Naive thymus-derived CD4-positive, alpha-beta T cell (primary cell): ENCODE measurements at regions of chr7 and their contacts with region 1.

Region 1: DNA sequence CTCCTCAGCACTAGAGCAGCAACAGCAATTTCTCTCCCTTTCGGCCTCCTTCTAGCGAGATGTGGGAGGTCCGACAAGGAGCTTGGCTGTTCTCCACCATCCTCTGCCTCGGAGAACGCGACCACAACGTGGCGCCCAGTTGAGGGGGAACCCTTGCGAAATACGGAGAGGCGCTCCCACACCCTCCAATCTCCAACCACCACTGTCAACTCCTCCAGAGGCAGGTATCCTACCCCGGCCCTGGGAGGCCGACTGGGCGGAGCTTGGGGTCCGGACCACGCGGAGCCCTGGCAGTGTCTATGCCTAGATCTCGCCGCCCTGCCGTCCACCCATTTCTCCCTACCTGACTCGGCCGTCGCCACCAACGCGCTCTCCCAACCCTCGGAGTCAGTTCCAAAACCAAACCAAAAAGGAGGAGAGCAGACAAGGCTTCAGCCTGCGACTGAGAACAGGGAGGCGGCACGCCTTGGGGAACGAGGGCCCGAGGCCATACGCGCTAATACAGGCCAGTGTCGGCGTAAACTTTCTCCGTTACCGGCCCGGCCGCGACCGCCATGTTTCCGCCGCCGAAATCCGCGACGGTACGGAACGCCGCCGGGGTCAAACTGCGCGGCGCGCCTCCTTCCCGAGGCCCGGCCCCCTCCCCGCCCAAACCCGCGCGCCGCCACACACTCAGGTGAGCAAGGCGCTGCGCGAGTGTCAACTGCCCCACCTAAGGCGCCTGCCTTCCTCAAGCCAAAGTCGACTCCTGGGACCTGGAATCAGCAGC is at the start of gene TMEM168:
- DNase-seq: peak; percentile 75 to 91 (median 83)
- ATAC-seq: peak; percentile 94
- H3K4me3 ChIP-seq: peak within 1 kb of the TSS; percentile 98
- H3K4me3 Mint-ChIP-seq: peak within 1 kb of the TSS; percentile 90 to 97 (median 95)
- H3K27ac ChIP-seq: peak within 1 kb of the TSS; percentile 85
- H3K27ac Mint-ChIP-seq: peak within 1 kb of the TSS; percentile 63 to 93 (median 88)
- H3K4me1 ChIP-seq: peaks cover 13 to 23% of the 10 kb centered on the region in 2 donors
- H3K4me1 Mint-ChIP-seq: peaks cover 27 to 50% (median 36%) of the 10 kb centered on the region in 7 donors
- H3K27me3 ChIP-seq: no peaks in the 10 kb centered on the region
- H3K27me3 Mint-ChIP-seq: no peaks in the 10 kb centered on the region
- total RNA-seq, gene TMEM168: 18.3 to 30.1 (median 20.7) TPM

Region 2: DNA sequence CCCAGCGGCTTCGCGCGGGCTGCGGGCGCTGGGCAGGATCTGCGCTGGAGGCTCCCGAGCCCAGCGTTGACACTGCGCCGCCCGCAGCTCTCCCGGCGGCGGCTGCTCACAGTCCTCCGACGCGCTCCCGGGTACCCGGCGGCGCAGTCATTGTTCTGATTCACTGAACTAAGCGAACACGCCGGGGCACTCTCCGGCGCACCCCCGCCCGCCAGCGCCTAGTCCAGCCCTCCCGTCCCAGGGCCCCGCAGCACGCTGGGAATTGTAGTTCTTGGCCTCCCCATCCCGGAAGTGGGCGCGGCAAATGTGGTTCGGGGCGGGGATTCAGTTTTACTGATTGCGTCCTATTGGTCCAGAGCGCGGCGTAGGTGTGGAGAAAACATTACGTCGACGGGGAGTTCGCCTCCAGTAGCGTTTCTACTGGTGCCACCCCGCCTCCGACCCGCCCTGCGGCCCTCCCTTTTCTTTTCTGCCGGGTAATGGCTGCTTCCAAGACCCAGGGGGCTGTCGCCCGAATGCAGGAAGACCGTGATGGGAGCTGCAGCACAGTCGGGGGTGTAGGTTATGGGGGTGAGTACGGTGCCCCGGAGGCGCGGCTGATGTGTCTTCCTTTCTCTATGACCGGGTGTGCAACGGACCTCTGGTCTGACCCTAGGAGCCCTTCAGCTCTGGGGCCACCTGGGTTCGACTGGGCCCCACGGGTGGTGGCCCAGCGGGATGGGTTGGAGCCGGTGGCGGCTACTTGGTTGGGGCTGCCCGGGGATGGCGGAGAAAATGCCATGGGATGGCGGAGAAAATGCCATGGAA is 583.6 kb before region 1 on chr7 and contains the starts of genes DOCK4 and ZNF277:
- CTCF ChIA-PET with region 1: no interaction called
- POLR2A ChIA-PET with region 1: interaction called, 3 read pairs
- intact Hi-C with region 1: loop called (anchors 1 kb)
- DNase-seq: peak; percentile 97 to 100 (median 99)
- ATAC-seq: peak; percentile 93
- H3K4me3 ChIP-seq: peak within 1 kb of the TSS; percentile 94
- H3K4me3 Mint-ChIP-seq: peak within 1 kb of the TSS; percentile 93 to 99 (median 96)
- H3K27ac ChIP-seq: peak within 1 kb of the TSS; percentile 71
- H3K27ac Mint-ChIP-seq: peak within 1 kb of the TSS; percentile 60 to 95 (median 85)
- H3K4me1 ChIP-seq: peaks cover 14 to 22% of the 10 kb centered on the region in 2 donors
- H3K4me1 Mint-ChIP-seq: peaks cover 25 to 57% (median 39%) of the 10 kb centered on the region in 7 donors
- H3K27me3 ChIP-seq: peaks cover 15% of the 10 kb centered on the region in 2 donors
- H3K27me3 Mint-ChIP-seq: peaks cover 25 to 36% (median 29%) of the 10 kb centered on the region in 5 donors
- total RNA-seq, gene DOCK4: 0.19 to 3.1 (median 2.4) TPM
- total RNA-seq, gene ZNF277: 19.5 to 38.8 (median 25.9) TPM

Region 3: DNA sequence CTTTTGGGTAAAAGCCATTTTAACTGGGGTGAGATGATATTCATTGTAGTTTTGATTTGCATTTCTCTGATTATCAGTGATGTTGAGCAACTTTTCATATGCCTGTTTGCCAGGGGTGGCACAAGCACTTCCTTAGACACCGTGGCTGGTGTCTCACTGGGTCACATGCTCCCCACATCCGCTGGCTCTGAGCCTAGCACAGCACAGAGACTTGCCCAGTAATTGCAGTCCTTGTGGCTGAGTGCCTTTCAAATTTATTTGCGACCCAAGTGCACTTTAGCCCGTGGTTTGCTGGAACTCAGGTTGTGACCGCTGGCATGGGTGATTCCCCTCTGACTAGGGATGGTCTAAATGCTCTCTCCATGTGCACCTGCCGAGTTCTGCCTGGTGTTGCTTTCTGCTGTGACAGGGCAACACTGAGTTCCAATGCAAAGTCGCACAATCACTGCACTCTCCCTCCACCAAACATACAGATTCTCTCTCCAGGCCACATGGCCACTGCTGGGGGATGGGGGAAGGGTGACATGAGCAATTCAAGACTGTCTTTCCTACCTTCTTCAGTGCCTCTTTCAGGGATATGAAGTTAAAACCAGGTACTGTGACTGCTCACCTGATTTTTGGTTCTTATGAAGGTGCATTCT is 517.0 kb before region 1 on chr7:
- CTCF ChIA-PET with region 1: no interaction called
- POLR2A ChIA-PET with region 1: no interaction called
- intact Hi-C with region 1: no loop called
- DNase-seq: no peak
- ATAC-seq: peak; percentile 58
- H3K4me3 ChIP-seq: no peak overlapping the region
- H3K4me3 Mint-ChIP-seq: peak overlapping the region in 3 of 10 donors; percentile 5 to 11 (median 7)
- H3K27ac ChIP-seq: no peak overlapping the region
- H3K27ac Mint-ChIP-seq: peak overlapping the region in 1 of 9 donors; percentile 57
- H3K4me1 ChIP-seq: no peaks in the 10 kb centered on the region
- H3K4me1 Mint-ChIP-seq: peaks cover 0 to 39% (median 24%) of the 10 kb centered on the region in 7 donors
- H3K27me3 ChIP-seq: no peaks in the 10 kb centered on the region
- H3K27me3 Mint-ChIP-seq: no peaks in the 10 kb centered on the region

Region 4: DNA sequence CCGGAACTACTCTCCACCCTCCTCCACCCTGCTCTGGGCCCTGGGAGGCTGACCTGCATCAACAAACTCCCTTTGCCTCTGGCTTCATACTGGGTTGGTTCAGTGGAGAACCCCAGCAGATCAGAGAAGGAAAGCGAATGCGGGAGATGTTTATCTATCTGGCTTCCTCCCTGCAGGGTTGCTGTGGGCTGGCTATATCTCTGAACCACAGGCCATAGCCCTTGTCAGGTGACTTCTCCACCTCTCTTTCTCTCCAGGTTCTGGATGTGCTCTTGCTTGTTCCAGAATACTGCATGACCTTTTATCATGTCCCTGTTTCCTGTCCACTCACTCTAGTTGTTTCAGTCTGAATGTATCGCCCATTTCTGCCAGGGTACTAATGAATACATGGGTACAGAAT is 391.5 kb before region 1 on chr7:
- CTCF ChIA-PET with region 1: no interaction called
- POLR2A ChIA-PET with region 1: interaction called, 7 read pairs
- intact Hi-C with region 1: loop called in 1 of 2 experiments (anchors 2 kb)
- DNase-seq: no peak
- ATAC-seq: peak; percentile 88
- H3K4me3 ChIP-seq: no peak overlapping the region
- H3K4me3 Mint-ChIP-seq: peak overlapping the region in 6 of 10 donors; percentile 10 to 55 (median 42)
- H3K27ac ChIP-seq: no peak overlapping the region
- H3K27ac Mint-ChIP-seq: peak overlapping the region in 2 of 9 donors; percentile 47 to 69
- H3K4me1 ChIP-seq: peaks cover 0 to 16% of the 10 kb centered on the region in 2 donors
- H3K4me1 Mint-ChIP-seq: peaks cover 14 to 27% (median 20%) of the 10 kb centered on the region in 7 donors
- H3K27me3 ChIP-seq: no peaks in the 10 kb centered on the region
- H3K27me3 Mint-ChIP-seq: peaks cover 0 to 34% (median 4%) of the 10 kb centered on the region in 5 donors

Region 5: GRCh38 chr7:112770084-112770483 is 19.9 kb before region 1 on chr7:
- CTCF ChIA-PET with region 1: no interaction called
- POLR2A ChIA-PET with region 1: no interaction called
- intact Hi-C with region 1: no loop called
- DNase-seq: no peak
- ATAC-seq: no peak
- H3K4me3 ChIP-seq: no peak overlapping the region
- H3K4me3 Mint-ChIP-seq: no peak overlapping the region
- H3K27ac ChIP-seq: no peak overlapping the region
- H3K27ac Mint-ChIP-seq: no peak overlapping the region
- H3K4me1 ChIP-seq: no peaks in the 10 kb centered on the region
- H3K4me1 Mint-ChIP-seq: peaks cover 0 to 20% (median 6%) of the 10 kb centered on the region in 7 donors
- H3K27me3 ChIP-seq: no peaks in the 10 kb centered on the region
- H3K27me3 Mint-ChIP-seq: no peaks in the 10 kb centered on the region

Region 6: GRCh38 chr7:113118074-113118959 is 328.3 kb after region 1 on chr7 and contains the start of gene SMIM30:
- CTCF ChIA-PET with region 1: no interaction called
- POLR2A ChIA-PET with region 1: no interaction called
- intact Hi-C with region 1: loop called (anchors 1 to 2 kb)
- DNase-seq: peak; percentile 59 to 90 (median 86)
- ATAC-seq: peak; percentile 100
- H3K4me3 ChIP-seq: peak within 1 kb of the TSS; percentile 75
- H3K4me3 Mint-ChIP-seq: peak within 1 kb of the TSS; percentile 81 to 99 (median 96)
- H3K27ac ChIP-seq: peak within 1 kb of the TSS; percentile 80
- H3K27ac Mint-ChIP-seq: peak within 1 kb of the TSS; percentile 82 to 99 (median 94)
- H3K4me1 ChIP-seq: peaks cover 0 to 6% of the 10 kb centered on the region in 2 donors
- H3K4me1 Mint-ChIP-seq: peaks cover 6 to 32% (median 22%) of the 10 kb centered on the region in 7 donors
- H3K27me3 ChIP-seq: no peaks in the 10 kb centered on the region
- H3K27me3 Mint-ChIP-seq: no peaks in the 10 kb centered on the region
- total RNA-seq, gene SMIM30: 9.3 to 21.0 (median 20.5) TPM